Sigmoid colon (tissue), 7 donors: ENCODE measurements at regions of chr1 and their contacts with region 1.

Region 1: GRCh38 chr1:33255347-33256311 is 663 bp upstream of the ZNF362 start:
- DNase-seq: peak; percentile 89
- H3K4me3 ChIP-seq: peak overlapping the region; percentile 21 to 73 (median 66)
- H3K27ac ChIP-seq: peak overlapping the region; percentile 91 to 96 (median 93)
- H3K4me1 ChIP-seq: peaks cover 0 to 43% (median 33%) of the 10 kb centered on the region in 4 donors
- H3K27me3 ChIP-seq: no peaks in the 10 kb centered on the region
- CTCF ChIP-seq: no peak
- EP300 ChIP-seq: no peak
- POLR2A ChIP-seq: peak; percentile 30 to 42

Region 2: GRCh38 chr1:33127001-33127791 is 128.4 kb before region 1 on chr1:
- intact Hi-C with region 1: loop called (anchors 1 kb)
- DNase-seq: peak; percentile 99
- H3K4me3 ChIP-seq: peak overlapping the region; percentile 46 to 58 (median 55)
- H3K27ac ChIP-seq: peak overlapping the region; percentile 75 to 87 (median 82)
- H3K4me1 ChIP-seq: peaks cover 0 to 15% (median 12%) of the 10 kb centered on the region in 4 donors
- H3K27me3 ChIP-seq: no peaks in the 10 kb centered on the region
- CTCF ChIP-seq: peak; percentile 45 to 86 (median 80)
- EP300 ChIP-seq: peak in 1 of 4 donors; percentile 76
- POLR2A ChIP-seq: peak in 1 of 2 donors; percentile 18

Region 3: DNA sequence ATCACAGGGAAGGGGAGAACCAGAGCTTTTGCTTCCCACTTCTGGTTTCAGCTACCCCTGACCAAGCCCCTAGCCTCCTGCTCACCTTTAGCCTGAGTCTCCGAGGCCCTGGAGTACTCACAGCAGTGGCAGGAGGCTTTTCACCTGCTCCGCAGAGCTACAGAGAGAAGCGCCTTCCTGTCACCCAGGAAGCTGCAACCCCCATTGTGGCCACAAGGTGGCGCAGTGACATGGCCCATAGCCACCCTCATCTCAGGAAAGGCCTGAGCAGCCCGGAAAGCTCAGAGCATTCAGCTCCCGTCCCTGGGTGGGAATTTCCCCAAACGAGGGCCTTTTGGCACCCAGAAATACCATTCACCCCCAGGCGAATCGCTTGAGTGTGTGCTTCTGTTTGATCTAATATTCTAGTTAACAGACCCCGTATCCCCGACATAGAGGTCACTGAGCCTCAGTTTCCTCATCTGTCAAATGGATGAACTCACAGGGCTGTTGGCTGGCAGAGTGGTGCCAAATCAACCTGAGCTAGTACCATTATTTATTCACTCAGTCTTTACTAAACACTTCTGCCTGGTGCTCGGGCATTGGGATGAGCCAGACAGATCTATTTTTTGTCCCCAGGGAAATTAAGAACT is 39.9 kb after region 1 on chr1:
- intact Hi-C with region 1: no loop called
- DNase-seq: peak; percentile 92
- H3K4me3 ChIP-seq: no peak overlapping the region
- H3K27ac ChIP-seq: peak overlapping the region; percentile 41 to 53 (median 48)
- H3K4me1 ChIP-seq: peaks cover 0 to 31% (median 20%) of the 10 kb centered on the region in 4 donors
- H3K27me3 ChIP-seq: no peaks in the 10 kb centered on the region
- CTCF ChIP-seq: peak; percentile 95 to 99 (median 98)
- EP300 ChIP-seq: no peak
- POLR2A ChIP-seq: no peak

Region 4: GRCh38 chr1:33367485-33368405 is 112.1 kb after region 1 on chr1:
- intact Hi-C with region 1: no loop called
- DNase-seq: peak; percentile 94
- H3K4me3 ChIP-seq: no peak overlapping the region
- H3K27ac ChIP-seq: peak overlapping the region; percentile 59 to 84 (median 75)
- H3K4me1 ChIP-seq: peaks cover 0 to 65% (median 57%) of the 10 kb centered on the region in 4 donors
- H3K27me3 ChIP-seq: no peaks in the 10 kb centered on the region
- CTCF ChIP-seq: peak; percentile 93 to 97 (median 95)
- EP300 ChIP-seq: no peak
- POLR2A ChIP-seq: no peak